ENCODE measurements at regions of chr9 and their contacts with region 1.

Region 1: GRCh38 chr9:93302551-93303257 is 118.8 kb downstream of the WNK2 start:
- DNase-seq: peak; percentile 74

Region 2: GRCh38 chr9:93159601-93160471 is 142.9 kb before region 1 on chr9:
- in situ Hi-C with region 1: loop called (anchors 10 kb)
- DNase-seq: peak; percentile 80

Region 3: DNA sequence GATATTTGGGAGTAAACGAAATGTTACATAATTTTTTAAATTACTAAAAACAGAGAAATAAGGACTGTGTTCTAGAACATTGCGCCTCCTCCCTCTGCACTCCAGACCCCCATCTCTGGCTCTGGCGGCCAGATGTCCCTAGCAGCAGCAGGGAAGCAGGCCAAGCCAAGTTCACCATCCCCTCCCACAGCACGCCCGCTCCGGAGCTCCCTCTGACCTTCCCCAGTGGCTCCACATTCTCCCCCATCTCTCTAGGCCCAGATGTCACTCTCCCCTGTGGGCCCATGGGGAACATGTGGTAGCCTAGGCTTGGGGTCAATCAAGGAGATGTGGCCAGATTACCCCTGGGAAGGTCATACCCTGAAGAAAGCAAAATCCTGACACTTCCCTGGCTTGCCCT is 125.0 kb before region 1 on chr9:
- in situ Hi-C with region 1: no loop called
- DNase-seq: no peak

Measured in KBM-7 (cell line).